ENCODE measurements at regions of chr18 and their contacts with region 1.

Region 1: DNA sequence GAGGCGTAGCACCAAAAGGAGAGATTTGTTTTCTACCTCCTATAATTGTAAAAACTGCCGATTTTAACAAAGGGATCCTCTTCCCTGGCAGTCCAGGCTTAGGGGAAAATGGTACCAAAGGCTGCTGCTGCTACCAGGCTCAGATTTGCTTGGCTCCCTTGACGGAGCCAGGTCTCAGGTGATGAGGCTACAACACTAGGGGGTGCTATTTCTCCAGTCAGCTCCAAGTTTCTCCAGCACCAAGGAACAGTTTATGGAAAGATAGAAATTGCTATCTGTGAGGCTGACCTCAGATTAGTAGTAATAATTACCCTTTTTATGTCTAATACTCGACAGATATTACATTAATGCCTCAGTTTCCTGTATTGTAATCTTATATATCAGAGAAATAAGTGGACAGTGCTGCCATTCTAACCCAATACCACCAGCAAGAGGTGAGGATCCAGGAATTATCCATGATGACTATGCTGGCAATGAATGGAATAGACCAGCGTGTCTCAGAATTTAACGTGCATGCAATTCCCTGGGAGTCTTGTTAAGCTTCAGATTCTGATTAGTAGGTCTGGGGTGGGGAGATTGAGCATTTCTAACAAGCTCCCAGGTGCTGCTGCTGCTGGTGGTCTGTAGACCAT is 111.3 kb downstream of the ESCO1 start:
- DNase-seq: peak; percentile 8 to 27 (median 22)
- H3K4me3 ChIP-seq: no peak overlapping the region
- H3K4me3 Mint-ChIP-seq: no peak overlapping the region
- H3K27ac ChIP-seq: no peak overlapping the region
- H3K27ac Mint-ChIP-seq: no peak overlapping the region
- H3K4me1 ChIP-seq: no peaks in the 10 kb centered on the region
- H3K4me1 Mint-ChIP-seq: no peaks in the 10 kb centered on the region
- H3K27me3 ChIP-seq: no peaks in the 10 kb centered on the region
- H3K27me3 Mint-ChIP-seq: peaks cover 1 to 5% (median 1%) of the 10 kb centered on the region in 3 donors
- CTCF ChIP-seq: peak; percentile 72

Region 2: GRCh38 chr18:21117409-21118131 is 371.7 kb before region 1 on chr18:
- intact Hi-C with region 1: no loop called
- DNase-seq: peak; percentile 81 to 93 (median 87)
- H3K4me3 ChIP-seq: peak overlapping the region in 2 of 3 experiments; percentile 12 to 33
- H3K4me3 Mint-ChIP-seq: peak overlapping the region in 1 of 2 donors; percentile 54
- H3K27ac ChIP-seq: peak overlapping the region in 1 of 2 donors; percentile 86
- H3K27ac Mint-ChIP-seq: peak overlapping the region; percentile 81 to 96 (median 93)
- H3K4me1 ChIP-seq: peaks cover 27 to 34% of the 10 kb centered on the region in 2 donors
- H3K4me1 Mint-ChIP-seq: peaks cover 25% of the 10 kb centered on the region
- H3K27me3 ChIP-seq: no peaks in the 10 kb centered on the region
- H3K27me3 Mint-ChIP-seq: no peaks in the 10 kb centered on the region
- CTCF ChIP-seq: no peak

Region 3: GRCh38 chr18:21472741-21473140 is 16.5 kb before region 1 on chr18:
- intact Hi-C with region 1: no loop called
- DNase-seq: no peak
- H3K4me3 ChIP-seq: no peak overlapping the region
- H3K4me3 Mint-ChIP-seq: no peak overlapping the region
- H3K27ac ChIP-seq: no peak overlapping the region
- H3K27ac Mint-ChIP-seq: no peak overlapping the region
- H3K4me1 ChIP-seq: no peaks in the 10 kb centered on the region
- H3K4me1 Mint-ChIP-seq: no peaks in the 10 kb centered on the region
- H3K27me3 ChIP-seq: no peaks in the 10 kb centered on the region
- H3K27me3 Mint-ChIP-seq: peaks cover 2 to 13% (median 3%) of the 10 kb centered on the region in 3 donors
- CTCF ChIP-seq: no peak

Region 4: DNA sequence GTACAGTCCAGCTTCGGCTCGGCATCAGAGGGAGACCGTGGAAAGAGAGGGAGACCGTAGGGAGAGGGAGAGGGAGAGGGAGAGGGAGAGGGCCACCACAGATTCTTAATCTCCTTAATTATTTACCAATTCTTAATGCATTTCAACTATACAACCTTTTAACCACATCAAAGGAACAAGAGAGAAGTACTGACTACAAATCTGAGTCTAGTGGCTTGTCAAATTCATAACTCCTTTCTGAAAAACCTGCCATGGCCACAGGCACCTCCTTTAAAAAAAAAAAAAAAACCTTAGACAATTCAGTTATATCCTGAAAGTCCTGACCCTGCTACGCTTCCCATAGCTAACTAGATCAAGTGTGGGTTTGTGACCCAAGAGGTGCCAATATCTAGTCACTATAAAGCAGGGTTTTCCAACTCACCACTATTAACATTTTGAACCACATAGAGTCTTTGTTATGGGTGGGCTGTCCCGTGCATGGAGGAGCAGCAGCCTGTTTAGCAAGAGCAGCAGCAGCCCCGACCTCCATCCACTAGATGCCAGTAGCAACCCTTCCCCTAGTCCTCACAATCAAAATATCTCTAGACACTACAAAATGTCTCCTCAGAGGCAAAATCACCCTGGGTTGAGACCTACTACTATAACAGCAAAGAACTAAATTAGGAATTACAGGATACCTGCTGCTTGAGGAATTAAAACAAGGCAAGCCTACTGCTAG is 104.5 kb after region 1 on chr18:
- intact Hi-C with region 1: no loop called
- DNase-seq: no peak
- H3K4me3 ChIP-seq: no peak overlapping the region
- H3K4me3 Mint-ChIP-seq: no peak overlapping the region
- H3K27ac ChIP-seq: no peak overlapping the region
- H3K27ac Mint-ChIP-seq: no peak overlapping the region
- H3K4me1 ChIP-seq: peaks cover under 1 to 3% of the 10 kb centered on the region in 2 donors
- H3K4me1 Mint-ChIP-seq: peaks cover 8% of the 10 kb centered on the region
- H3K27me3 ChIP-seq: no peaks in the 10 kb centered on the region
- H3K27me3 Mint-ChIP-seq: peaks cover 0 to 2% (median 0%) of the 10 kb centered on the region in 3 donors
- CTCF ChIP-seq: no peak

Region 5: DNA sequence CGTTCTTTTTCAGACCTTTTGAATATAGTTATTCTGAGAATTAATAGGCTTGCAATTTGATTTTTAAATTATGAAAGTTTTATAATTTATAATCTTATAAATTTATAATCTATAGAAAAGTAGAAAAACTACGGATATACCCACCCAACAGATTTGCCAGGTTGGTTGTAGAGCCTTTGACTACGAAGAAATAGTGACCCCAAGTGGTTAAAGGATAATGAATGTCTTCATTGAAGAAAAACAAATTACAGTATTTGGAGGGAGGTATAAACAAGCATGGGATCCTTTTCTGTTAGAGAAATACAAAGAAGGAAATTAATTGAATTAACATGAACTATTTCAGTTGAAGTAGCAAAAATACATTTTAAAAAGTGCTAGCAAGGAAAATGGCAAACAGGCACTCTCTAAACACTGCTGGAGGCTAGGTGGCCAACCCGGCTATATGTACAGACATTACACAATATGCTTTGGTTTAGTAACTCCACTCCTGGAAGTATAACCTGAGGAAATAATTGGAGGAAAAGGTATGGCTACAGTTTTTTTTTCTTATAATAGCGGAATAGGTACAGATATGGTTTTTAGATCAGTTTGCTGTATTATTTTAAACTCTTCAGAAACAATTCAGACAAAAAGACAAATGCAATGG is 362.2 kb after region 1 on chr18:
- intact Hi-C with region 1: no loop called
- DNase-seq: no peak
- H3K4me3 ChIP-seq: no peak overlapping the region
- H3K4me3 Mint-ChIP-seq: no peak overlapping the region
- H3K27ac ChIP-seq: no peak overlapping the region
- H3K27ac Mint-ChIP-seq: peak overlapping the region in 1 of 7 donors; percentile 8
- H3K4me1 ChIP-seq: peaks cover 5 to 12% of the 10 kb centered on the region in 2 donors
- H3K4me1 Mint-ChIP-seq: peaks cover 12% of the 10 kb centered on the region
- H3K27me3 ChIP-seq: no peaks in the 10 kb centered on the region
- H3K27me3 Mint-ChIP-seq: no peaks in the 10 kb centered on the region
- CTCF ChIP-seq: no peak

Region 6: DNA sequence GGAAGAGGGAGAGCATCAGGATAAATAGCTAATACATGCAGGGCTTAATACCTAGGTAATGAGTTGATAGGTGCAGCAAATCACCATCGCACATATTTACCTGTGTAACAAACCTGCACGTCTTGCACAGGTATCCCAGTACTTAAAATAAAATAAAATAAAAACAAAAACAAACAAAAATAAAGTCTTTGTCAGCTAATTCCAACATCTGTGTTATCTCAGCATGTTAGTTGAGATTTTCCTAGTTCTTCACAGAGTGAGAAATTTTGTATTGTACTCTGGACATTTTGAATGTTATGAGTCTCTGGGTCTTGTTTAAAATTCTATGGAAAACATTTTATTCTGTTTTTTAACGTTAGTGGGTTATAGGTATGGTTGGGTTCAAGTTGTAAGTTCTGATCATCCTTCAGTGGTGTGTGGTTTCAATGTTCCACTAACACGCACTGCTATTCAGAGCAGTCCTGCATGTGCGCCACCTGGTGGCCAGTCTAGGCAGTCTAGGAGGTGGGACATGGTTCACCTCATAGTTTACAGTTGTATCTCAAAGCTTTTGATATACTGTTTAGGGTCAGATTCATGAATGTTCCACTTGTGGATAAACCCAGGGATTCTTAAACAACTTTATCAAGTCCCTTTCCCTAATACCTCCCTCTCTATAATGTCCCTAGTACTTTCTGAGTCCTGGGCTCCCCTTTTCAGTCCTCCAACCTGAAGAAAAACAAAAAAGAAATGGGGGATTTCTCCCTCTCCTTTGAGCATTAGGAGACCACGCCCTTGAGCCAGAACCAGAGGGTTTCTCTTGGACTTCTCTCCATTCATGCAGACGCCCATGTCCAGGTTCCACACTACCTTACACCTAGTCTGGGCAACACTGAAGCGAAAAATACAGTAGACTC is 466.8 kb after region 1 on chr18:
- intact Hi-C with region 1: loop called (anchors 2 to 5 kb)
- DNase-seq: peak; percentile 36 to 63 (median 51)
- H3K4me3 ChIP-seq: no peak overlapping the region
- H3K4me3 Mint-ChIP-seq: no peak overlapping the region
- H3K27ac ChIP-seq: no peak overlapping the region
- H3K27ac Mint-ChIP-seq: no peak overlapping the region
- H3K4me1 ChIP-seq: no peaks in the 10 kb centered on the region
- H3K4me1 Mint-ChIP-seq: no peaks in the 10 kb centered on the region
- H3K27me3 ChIP-seq: no peaks in the 10 kb centered on the region
- H3K27me3 Mint-ChIP-seq: peaks cover 0 to 9% (median 2%) of the 10 kb centered on the region in 3 donors
- CTCF ChIP-seq: peak; percentile 96

Measured in CD14-positive monocyte (primary cell).